Posterior vena cava (tissue), 2 donors: ENCODE measurements at regions of chr2 and their contacts with region 1.

Region 1: GRCh38 chr2:173132531-173132930 is 56.9 kb downstream of the MAP3K20 start:
- DNase-seq: no peak

Region 2: GRCh38 chr2:173171924-173172643 is 39.6 kb after region 1 on chr2:
- intact Hi-C with region 1: loop called in 1 of 2 experiments (anchors 1 kb)
- DNase-seq: no peak